ENCODE measurements at regions of chr16 and their contacts with region 1.

Region 1: DNA sequence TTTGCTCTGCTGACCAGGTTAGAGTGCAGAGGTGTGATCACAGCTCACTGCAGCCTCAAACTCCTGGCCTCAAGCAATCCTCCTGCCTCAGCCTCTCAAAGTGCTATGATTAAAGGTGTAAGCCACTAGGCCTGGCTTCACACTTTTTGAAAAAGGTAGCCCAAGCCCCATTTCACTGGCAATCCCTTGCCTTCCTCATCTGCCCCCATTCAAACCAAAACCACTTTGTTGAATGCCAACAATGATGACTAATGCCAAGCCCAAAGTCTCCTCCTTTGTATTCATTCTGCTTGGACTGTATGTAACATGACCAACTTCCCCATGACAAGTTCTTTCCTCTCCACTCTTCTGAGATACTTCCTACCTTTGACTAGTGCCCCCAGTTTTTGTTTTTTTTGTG is 33.1 kb downstream of the N4BP1 start:
- DNase-seq: no peak
- H3K4me3 Mint-ChIP-seq: peak overlapping the region; percentile 16
- H3K27ac Mint-ChIP-seq: peak overlapping the region; percentile 81
- H3K4me1 Mint-ChIP-seq: peaks cover 39% of the 10 kb centered on the region
- H3K27me3 Mint-ChIP-seq: no peaks in the 10 kb centered on the region

Region 2: DNA sequence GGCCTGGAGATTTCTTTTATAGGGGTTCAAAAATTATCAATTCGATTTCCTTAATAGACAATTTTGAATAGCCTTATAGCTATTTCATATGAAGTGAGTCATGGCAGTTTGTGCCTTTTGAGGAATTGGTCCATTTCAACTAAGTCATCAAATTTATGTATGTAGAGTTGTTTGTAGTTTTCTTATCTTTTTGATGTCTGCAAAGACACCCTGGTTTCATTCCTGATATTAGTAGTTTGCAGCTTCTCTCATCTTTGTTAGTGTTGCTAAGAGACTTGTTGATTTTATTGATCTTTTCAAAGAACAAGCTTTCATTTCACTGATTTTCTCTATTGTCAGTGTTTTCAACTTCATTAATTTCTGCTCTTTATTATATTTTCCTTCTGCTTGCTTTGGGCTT is 11.2 kb before region 1 on chr16:
- intact Hi-C with region 1: loop called (anchors 1 kb)
- DNase-seq: no peak
- H3K4me3 Mint-ChIP-seq: no peak overlapping the region
- H3K27ac Mint-ChIP-seq: peak overlapping the region; percentile 74
- H3K4me1 Mint-ChIP-seq: peaks cover 45% of the 10 kb centered on the region
- H3K27me3 Mint-ChIP-seq: no peaks in the 10 kb centered on the region